Left colon (tissue), 2 donors: ENCODE measurements at regions of chr1 and their contacts with region 1.

Region 1: GRCh38 chr1:244451951-244452795 is 464 bp upstream of the ADSS2 start:
- DNase-seq: peak; percentile 99 to 100
- ATAC-seq: peak; percentile 94

Region 2: GRCh38 chr1:244265507-244265906 is 186.7 kb before region 1 on chr1:
- intact Hi-C with region 1: no loop called
- DNase-seq: no peak
- ATAC-seq: no peak

Region 3: DNA sequence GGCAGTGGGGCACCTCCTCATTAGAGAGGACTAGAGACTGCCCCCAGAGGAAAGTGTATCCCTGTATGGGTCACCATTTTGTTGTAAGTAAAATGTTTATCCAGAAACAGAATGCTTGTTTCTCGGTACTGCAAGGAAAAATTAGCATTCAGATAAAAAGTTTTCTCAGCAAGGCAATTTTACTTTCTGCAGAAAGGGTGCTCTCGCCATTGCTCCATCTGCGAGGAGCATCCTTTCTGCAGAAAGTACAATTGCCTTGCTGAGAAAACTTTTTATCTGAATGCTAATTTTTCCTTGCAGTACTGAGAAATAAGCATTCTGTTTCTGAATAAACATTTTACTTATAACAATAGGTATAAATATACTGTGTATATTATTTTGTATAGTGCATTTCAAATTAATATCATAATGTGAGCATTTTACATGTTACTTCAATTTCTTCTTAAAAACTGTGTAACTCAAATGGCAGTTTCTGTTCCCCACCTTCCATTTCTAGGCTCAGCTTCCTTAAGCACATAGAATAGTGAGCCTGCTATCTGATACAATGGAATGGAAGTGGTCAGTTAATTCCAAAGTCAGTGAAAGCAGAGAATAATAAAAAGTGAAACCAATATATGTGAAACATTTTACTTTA is 124.2 kb after region 1 on chr1:
- intact Hi-C with region 1: no loop called
- DNase-seq: no peak
- ATAC-seq: no peak

Region 4: GRCh38 chr1:244652699-244653466 is 200.7 kb after region 1 on chr1 and contains the start of gene DESI2:
- intact Hi-C with region 1: loop called in 1 of 2 experiments (anchors 10 kb)
- DNase-seq: peak; percentile 97 to 100
- ATAC-seq: peak; percentile 91
- total RNA-seq, gene DESI2: 28.2 to 30.8 TPM